Activated CD8-positive, alpha-beta memory T cell treated with anti-CD3 and anti-CD28 coated beads, Interleukin-2, amount 10 ng/mL, durations not matched to agents 7 days and 5 days (primary cell): ENCODE measurements at regions of chr10 and their contacts with region 1.

Region 1: DNA sequence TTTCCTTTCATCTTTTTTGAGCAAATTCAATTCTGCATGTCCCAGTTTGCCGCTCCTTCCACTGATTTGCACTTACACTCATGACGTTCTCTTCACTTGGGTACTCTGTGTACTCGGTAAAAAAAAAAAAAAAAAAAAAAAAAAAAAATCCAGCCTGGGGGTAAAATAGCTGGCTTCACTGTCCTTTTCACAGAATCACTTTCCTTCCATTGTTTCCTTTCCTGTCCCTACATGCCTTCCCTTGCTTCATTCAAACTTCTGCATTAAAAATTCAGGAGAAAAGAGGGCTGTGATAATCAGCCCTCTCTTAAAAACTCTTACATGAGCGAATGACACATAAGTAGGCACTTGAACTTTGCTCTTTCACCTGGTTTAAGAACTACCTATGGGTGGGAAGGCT is 8.7 kb downstream of the ANKRD1 start:
- DNase-seq: no peak
- ATAC-seq: no peak
- H3K4me3 Mint-ChIP-seq: no peak overlapping the region
- H3K27ac Mint-ChIP-seq: no peak overlapping the region
- H3K4me1 Mint-ChIP-seq: peaks cover 3% of the 10 kb centered on the region
- H3K27me3 Mint-ChIP-seq: peaks cover 10% of the 10 kb centered on the region

Region 2: DNA sequence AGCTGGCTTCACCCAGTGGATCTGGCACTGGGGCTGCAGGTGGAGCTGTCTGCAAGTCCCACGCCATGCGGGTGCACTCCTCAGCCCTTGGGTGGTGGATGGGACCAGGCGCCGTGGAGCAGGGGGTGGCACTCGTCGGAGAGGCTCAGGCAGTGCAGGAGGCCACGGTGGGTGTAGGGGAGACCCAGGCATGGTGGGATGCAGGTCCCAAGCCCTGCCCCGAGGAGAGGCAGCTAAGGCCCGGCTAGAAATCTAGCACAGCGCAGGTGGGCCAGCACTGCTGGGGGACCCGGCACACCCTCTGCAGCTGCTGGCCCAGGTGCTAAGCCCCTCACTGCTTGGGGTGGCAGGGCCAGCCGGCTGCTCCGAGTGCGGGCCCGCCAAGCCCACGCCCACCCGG is 80.1 kb before region 1 on chr10:
- CTCF ChIA-PET with region 1: no interaction called
- DNase-seq: no peak
- ATAC-seq: no peak
- H3K4me3 Mint-ChIP-seq: no peak overlapping the region
- H3K27ac Mint-ChIP-seq: no peak overlapping the region
- H3K4me1 Mint-ChIP-seq: no peaks in the 10 kb centered on the region
- H3K27me3 Mint-ChIP-seq: peaks cover 15% of the 10 kb centered on the region

Region 3: GRCh38 chr10:90947030-90947940 is 35.1 kb after region 1 on chr10:
- CTCF ChIA-PET with region 1: interaction called, 12 read pairs
- DNase-seq: peak; percentile 49
- ATAC-seq: peak; percentile 93
- H3K4me3 Mint-ChIP-seq: peak overlapping the region; percentile 23
- H3K27ac Mint-ChIP-seq: peak overlapping the region; percentile 86
- H3K4me1 Mint-ChIP-seq: peaks cover 24% of the 10 kb centered on the region
- H3K27me3 Mint-ChIP-seq: peaks cover 7% of the 10 kb centered on the region

Region 4: GRCh38 chr10:90969947-90970684 is 57.9 kb after region 1 on chr10:
- CTCF ChIA-PET with region 1: interaction called, 13 read pairs
- DNase-seq: no peak
- ATAC-seq: no peak
- H3K4me3 Mint-ChIP-seq: no peak overlapping the region
- H3K27ac Mint-ChIP-seq: no peak overlapping the region
- H3K4me1 Mint-ChIP-seq: no peaks in the 10 kb centered on the region
- H3K27me3 Mint-ChIP-seq: peaks cover 30% of the 10 kb centered on the region

Region 5: DNA sequence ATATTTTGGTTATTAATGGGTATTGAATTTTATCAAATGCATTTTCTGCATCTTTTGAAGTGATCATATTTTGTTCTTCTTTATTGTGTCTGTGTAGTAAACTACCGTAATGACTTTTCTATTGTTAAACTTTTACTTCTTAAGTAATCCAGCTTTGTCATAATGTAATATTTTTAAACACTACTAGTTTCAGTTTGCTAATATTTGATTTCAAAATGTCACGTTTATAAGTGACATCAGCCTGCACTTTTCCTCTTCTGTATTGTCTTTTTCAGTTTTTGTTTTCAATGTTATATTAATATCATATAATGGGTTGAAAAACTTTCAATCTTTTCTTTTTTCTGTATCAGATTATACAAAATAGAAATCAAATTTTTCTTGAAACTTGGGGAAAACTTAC is 80.3 kb after region 1 on chr10:
- CTCF ChIA-PET with region 1: no interaction called
- DNase-seq: no peak
- ATAC-seq: no peak
- H3K4me3 Mint-ChIP-seq: no peak overlapping the region
- H3K27ac Mint-ChIP-seq: no peak overlapping the region
- H3K4me1 Mint-ChIP-seq: peaks cover 7% of the 10 kb centered on the region
- H3K27me3 Mint-ChIP-seq: peaks cover 10% of the 10 kb centered on the region